ENCODE measurements at regions of chr6 and their contacts with region 1.

Region 1: GRCh38 chr6:35146453-35146852 is 5.3 kb upstream of the TCP11 start:
- DNase-seq: no peak

Region 2: DNA sequence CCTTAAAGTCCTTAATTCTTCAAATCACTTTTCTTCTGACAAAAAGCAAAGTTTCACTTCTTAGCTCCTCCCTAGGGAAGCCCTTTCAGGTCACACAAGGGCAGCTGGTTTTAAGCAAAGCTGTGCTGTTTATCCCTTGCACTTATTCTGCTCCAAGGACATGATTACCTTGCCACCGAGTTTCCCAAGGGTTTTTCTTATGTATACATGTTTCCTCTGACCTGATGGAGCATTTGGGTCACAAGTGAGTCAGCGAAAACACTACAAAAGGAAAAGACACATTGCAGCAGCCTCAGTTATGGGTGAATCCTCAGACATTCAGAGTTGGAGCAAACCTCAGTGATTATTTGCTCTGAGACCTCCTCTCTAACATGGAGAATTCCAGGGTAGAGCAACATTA is 423.2 kb before region 1 on chr6:
- intact Hi-C with region 1: no loop called
- DNase-seq: no peak

Region 3: GRCh38 chr6:35202066-35202546 is 55.7 kb after region 1 on chr6:
- intact Hi-C with region 1: loop called (anchors 2 to 5 kb)
- DNase-seq: no peak

Region 4: GRCh38 chr6:35209081-35209480 is 62.6 kb after region 1 on chr6:
- intact Hi-C with region 1: loop called (anchors 2 to 5 kb)
- DNase-seq: no peak

Region 5: GRCh38 chr6:35240840-35241801 is 94.7 kb after region 1 on chr6:
- intact Hi-C with region 1: loop called in 1 of 2 experiments (anchors 2 kb)
- DNase-seq: peak; percentile 89